ENCODE measurements at regions of chr3 and their contacts with region 1.

Region 1: DNA sequence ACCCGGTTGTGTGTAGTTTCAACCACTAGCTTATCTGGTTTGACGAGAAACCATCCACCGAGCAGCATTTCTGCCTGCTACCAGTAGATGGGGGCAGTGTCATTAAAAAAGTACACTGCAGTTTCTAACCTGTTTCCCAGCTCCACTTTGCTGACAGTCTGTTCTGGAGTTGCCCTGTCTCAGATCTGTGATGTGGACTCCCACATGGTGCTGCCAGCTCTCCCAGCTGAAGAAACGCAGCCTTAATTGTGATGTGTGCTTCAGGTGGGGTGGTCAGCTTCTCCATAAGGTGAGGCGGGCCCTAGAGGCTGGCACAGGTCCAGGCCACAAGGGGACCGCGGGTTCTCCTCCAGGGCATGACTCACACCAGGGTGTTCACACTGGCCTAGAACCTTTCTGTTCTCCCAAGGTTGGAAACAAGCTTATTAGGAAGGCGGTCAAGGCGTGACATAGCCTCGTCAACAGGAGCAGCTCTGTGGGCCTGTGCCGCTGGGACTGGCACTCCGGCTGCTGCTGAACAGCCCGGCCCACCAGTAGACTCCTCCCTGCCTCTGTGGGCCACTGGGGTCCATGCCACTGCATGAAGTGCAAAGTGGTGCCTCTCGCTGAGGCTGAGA is 2.9 kb upstream of the FAM43A start:
- DNase-seq: peak; percentile 88
- H3K4me3 ChIP-seq: no peak overlapping the region
- H3K27ac ChIP-seq: peak overlapping the region; percentile 52 to 56
- H3K4me1 ChIP-seq: peaks cover 3% of the 10 kb centered on the region
- H3K27me3 ChIP-seq: no peaks in the 10 kb centered on the region
- CTCF ChIP-seq: peak; percentile 78 to 99 (median 91)
- POLR2A ChIP-seq: no peak

Region 2: DNA sequence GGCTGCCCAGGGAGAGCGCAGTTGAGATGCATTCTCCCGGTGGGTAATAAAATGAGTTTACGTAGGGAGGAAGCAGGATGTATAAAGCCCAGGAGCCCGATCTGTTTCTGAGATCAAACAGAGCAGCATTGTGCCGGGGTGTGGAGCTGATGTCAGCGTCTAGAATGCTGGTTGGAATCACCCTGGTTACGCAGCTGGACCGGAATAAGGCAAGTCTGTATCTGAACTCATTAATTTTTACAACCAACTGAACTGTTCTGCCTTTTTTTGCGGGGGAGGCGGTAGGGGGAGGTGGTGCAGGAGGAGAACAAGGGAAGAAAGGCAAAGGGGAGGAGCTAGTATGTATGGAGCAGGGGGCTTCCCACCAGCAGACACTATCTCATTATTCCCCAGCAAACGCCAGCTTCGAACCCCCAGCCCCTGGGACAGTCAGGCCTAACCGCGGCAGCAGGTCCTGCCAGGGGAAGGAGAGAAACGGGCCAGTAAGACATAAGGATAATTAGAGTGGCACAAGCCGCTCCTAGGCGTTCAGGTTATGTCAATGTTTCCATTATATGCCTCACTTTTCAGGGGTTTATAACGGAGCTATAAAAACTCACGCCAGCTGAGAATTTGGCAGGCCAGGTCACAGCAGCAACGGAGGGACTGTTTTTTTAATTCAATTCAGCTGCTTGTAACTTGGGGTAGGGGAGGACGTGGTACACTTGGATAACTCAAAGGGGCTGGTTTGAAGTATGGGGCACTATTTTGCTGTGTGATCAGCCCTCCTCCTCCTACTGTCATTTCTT is 722.1 kb before region 1 on chr3:
- intact Hi-C with region 1: no loop called
- DNase-seq: peak; percentile 84
- H3K4me3 ChIP-seq: peak overlapping the region in 1 of 2 donors; percentile 5
- H3K27ac ChIP-seq: peak overlapping the region; percentile 58 to 78
- H3K4me1 ChIP-seq: peaks cover 20% of the 10 kb centered on the region
- H3K27me3 ChIP-seq: no peaks in the 10 kb centered on the region
- CTCF ChIP-seq: no peak
- POLR2A ChIP-seq: no peak

Region 3: GRCh38 chr3:194730321-194730744 is 47.5 kb after region 1 on chr3:
- intact Hi-C with region 1: no loop called
- DNase-seq: peak; percentile 49
- H3K4me3 ChIP-seq: no peak overlapping the region
- H3K27ac ChIP-seq: no peak overlapping the region
- H3K4me1 ChIP-seq: no peaks in the 10 kb centered on the region
- H3K27me3 ChIP-seq: no peaks in the 10 kb centered on the region
- CTCF ChIP-seq: no peak
- POLR2A ChIP-seq: no peak

Region 4: DNA sequence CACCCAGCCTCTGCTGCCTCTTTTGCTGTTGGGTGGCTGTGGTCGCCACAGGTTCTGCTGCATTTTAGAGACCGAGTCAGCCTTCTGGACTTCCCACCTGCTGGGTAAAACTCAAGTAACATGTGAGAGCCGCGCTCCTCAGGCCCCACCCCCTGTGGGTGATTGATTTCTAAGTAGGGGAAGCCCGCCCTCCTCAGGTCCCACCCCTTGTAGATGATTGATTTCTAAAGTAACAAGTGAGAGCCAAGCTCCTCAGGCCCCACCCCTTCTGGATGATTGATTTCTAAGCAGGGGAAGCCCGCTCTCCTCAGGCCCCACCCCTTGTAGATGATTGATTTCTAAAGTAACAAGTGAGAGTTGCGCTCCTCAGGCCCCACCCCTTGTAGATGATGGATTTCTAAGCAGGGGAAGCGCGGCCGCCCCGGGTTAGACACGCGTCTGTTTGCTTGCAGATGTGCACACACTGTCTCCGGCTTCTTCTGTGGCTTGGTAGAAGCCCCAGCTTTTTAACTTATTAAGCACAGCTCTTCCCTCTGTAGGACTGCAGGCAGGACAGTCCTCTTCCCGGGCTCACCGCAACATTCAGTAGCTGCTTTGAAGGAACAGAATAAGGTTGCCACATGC is 86.3 kb after region 1 on chr3:
- intact Hi-C with region 1: loop called (anchors 5 kb)
- DNase-seq: peak; percentile 94
- H3K4me3 ChIP-seq: peak overlapping the region; percentile 20 to 22
- H3K27ac ChIP-seq: peak overlapping the region in 1 of 2 donors; percentile 17
- H3K4me1 ChIP-seq: peaks cover 2% of the 10 kb centered on the region
- H3K27me3 ChIP-seq: no peaks in the 10 kb centered on the region
- CTCF ChIP-seq: peak in 2 of 4 experiments; percentile 6 to 10
- POLR2A ChIP-seq: peak; percentile 12

Region 5: GRCh38 chr3:194971965-194972364 is 289.2 kb after region 1 on chr3:
- intact Hi-C with region 1: no loop called
- DNase-seq: no peak
- H3K4me3 ChIP-seq: no peak overlapping the region
- H3K27ac ChIP-seq: no peak overlapping the region
- H3K4me1 ChIP-seq: no peaks in the 10 kb centered on the region
- H3K27me3 ChIP-seq: no peaks in the 10 kb centered on the region
- CTCF ChIP-seq: no peak
- POLR2A ChIP-seq: no peak

Region 6: GRCh38 chr3:194985031-194985578 is 302.3 kb after region 1 on chr3:
- intact Hi-C with region 1: loop called (anchors 5 kb)
- DNase-seq: peak; percentile 79
- H3K4me3 ChIP-seq: peak overlapping the region; percentile 1 to 8
- H3K27ac ChIP-seq: peak overlapping the region; percentile 23 to 34
- H3K4me1 ChIP-seq: peaks cover 3% of the 10 kb centered on the region
- H3K27me3 ChIP-seq: no peaks in the 10 kb centered on the region
- CTCF ChIP-seq: peak in 3 of 4 experiments; percentile 36 to 54 (median 42)
- POLR2A ChIP-seq: no peak

Region 7: DNA sequence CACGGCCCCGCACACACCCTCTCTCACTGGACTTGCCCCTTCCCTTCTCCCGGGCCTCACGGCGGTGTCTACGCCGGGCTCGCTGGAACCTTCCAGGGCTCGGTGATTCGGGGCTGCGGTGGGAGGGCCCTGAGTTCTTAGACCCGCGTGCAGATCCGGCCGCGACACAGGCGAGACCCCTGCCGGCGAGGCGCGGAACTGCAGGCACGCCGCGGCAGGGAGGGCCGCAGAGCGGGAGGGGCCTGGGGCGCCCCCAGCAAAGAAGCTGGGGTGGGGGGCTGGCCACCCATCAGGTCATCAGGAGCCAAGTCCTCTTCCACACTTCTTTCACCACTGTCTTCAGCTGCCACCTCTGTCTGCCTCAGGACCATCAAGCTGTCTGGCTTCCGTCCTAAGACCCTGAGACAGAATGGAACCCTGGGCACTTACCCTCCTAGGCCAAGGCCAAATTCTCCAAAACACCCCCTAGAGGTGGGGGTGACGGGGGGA is 423.7 kb after region 1 on chr3:
- intact Hi-C with region 1: loop called (anchors 5 kb)
- DNase-seq: peak; percentile 39
- H3K4me3 ChIP-seq: no peak overlapping the region
- H3K27ac ChIP-seq: no peak overlapping the region
- H3K4me1 ChIP-seq: peaks cover 5% of the 10 kb centered on the region
- H3K27me3 ChIP-seq: no peaks in the 10 kb centered on the region
- CTCF ChIP-seq: peak; percentile 98 to 100 (median 100)
- POLR2A ChIP-seq: no peak

Region 8: DNA sequence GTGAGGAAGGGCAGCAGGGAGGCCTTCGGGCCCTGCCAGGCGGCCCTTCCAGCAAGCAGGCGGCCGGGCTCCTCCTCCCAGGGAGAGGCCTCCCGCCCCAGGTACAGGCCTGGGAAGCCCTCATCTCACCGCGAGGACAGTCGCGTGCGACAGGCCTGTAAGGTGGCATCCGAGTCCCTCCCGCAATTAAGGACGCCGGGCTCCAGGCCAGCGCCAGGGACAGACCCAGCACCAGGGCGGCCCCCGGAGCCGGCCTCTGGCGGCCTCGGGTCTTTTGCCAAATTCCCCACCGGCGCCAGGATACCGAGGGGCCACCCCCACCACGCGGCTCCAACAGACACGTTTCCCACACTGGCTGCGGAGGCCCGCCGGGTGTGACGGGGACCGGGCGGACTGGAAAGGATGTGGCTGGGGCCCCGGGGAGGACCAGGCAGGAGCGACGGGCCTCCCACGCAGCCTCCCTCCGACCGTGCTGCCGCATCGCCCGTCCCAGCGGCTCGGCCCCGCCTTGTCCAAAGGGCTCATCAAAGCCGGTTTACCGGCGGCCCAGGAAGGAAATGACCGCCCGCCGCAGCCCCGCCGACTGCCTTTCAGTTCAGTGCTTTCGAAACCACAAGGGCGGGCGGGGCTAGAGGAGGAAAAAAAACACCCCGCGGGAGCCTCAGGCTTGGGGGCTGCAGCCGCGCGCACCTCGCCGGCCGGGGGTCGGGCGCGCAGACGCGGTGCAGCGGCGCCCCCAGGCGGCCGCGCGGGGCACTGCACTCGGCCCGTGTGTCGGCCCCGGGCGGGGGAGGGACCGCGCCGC is 576.9 kb after region 1 on chr3:
- intact Hi-C with region 1: loop called (anchors 2 kb)
- DNase-seq: peak; percentile 85
- H3K4me3 ChIP-seq: peak overlapping the region; percentile 53 to 60
- H3K27ac ChIP-seq: peak overlapping the region; percentile 93 to 94
- H3K4me1 ChIP-seq: peaks cover 11% of the 10 kb centered on the region
- H3K27me3 ChIP-seq: no peaks in the 10 kb centered on the region
- CTCF ChIP-seq: peak; percentile 62 to 100 (median 90)
- POLR2A ChIP-seq: peak; percentile 47

Region 9: GRCh38 chr3:195442573-195443390 is 760.0 kb after region 1 on chr3 and contains the start of gene ACAP2:
- intact Hi-C with region 1: loop called (anchors 10 kb)
- DNase-seq: peak; percentile 100
- H3K4me3 ChIP-seq: peak within 1 kb of the TSS; percentile 90 to 91
- H3K27ac ChIP-seq: peak within 1 kb of the TSS; percentile 92
- H3K4me1 ChIP-seq: peaks cover 2% of the 10 kb centered on the region
- H3K27me3 ChIP-seq: no peaks in the 10 kb centered on the region
- CTCF ChIP-seq: no peak
- POLR2A ChIP-seq: peak; percentile 99
- total RNA-seq, gene ACAP2: 30.5 to 56.8 TPM

Region 10: GRCh38 chr3:195522254-195523023 is 839.6 kb after region 1 on chr3:
- intact Hi-C with region 1: loop called (anchors 5 kb)
- DNase-seq: no peak
- H3K4me3 ChIP-seq: no peak overlapping the region
- H3K27ac ChIP-seq: no peak overlapping the region
- H3K4me1 ChIP-seq: no peaks in the 10 kb centered on the region
- H3K27me3 ChIP-seq: no peaks in the 10 kb centered on the region
- CTCF ChIP-seq: peak; percentile 76 to 93 (median 89)
- POLR2A ChIP-seq: no peak

Measured in prostate gland (tissue), 2 donors.